ENCODE measurements at regions of chr4 and their contacts with region 1.

Region 1: DNA sequence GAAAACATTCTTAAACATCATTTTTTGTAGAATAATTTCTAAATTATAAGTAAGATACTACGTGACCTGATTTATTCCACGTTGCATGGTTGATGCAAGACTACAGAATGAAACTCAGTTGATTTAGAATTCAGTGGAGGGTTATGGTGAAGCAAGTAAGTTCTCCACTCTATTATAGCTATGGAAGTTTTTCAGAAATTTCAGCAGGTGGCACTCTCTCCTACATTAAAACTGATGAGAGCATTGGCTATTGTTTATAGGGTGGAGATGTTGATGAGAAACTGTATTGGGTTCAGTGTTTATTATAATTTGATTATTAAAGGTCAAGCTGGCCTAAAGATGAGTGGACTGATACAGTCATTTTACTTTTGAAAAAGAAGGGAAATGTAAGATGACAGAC is 88.0 kb downstream of the FNIP2 start:
- DNase-seq: peak; percentile 55
- CTCF ChIP-seq: peak; percentile 62

Region 2: DNA sequence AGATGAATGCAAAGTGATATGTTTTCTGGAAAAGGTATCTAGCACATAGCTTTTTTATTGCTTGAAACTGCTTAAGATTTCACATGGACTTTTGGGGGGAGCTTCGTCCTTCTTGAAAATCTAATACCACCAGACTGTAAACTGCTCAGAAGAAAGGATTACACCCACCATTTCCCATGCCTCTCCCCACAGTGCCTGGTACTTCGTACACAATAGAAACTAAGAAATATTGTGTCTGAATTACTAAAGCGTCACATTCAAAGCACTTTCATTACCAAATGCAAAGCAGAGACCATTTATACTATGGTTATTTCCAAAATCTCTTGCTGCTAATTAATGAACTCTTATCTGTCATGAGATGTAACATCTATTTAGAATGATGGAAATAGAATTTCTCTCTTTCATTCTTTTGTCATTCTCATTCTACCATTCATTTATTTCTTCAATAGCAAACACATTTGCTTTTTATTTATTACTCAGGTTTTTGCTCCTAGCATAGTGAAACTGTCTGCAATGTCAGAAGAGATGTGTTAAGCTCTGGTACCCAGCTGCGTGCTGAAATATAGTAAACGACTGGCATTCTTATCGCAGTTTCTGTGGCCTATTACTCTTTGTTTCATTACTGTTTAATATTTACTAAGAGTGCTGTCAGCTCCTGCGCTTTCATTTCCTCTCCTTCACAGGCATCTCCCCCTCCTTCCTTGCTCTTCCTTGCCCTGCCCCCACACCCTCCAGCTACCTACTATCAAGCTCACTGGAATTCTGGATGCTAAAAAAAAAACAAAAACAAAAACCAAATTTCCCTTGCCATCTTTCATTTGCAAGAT is 194.6 kb after region 1 on chr4:
- in situ Hi-C with region 1: no loop called
- DNase-seq: peak; percentile 53
- CTCF ChIP-seq: no peak

Region 3: DNA sequence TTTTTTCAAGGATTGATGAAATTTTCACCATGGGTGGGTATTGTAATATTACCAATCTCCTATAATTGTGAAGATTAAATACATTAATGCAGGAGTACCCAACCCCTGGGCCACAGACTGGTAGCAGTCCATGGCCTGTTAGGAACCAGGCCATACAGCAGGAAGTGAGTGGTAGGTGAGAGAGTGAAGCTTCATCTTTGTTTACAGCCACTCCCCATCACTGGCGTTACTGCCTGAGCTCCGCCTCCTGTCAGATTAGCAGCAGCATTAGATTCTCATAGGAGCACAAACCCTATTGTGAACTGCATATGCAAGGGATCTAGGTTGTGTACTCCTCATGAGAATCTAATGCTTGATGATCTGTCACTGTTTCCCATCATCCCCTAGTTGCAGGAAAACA is 261.1 kb after region 1 on chr4:
- in situ Hi-C with region 1: no loop called
- DNase-seq: no peak
- CTCF ChIP-seq: no peak

Region 4: GRCh38 chr4:159185591-159186023 is 328.8 kb after region 1 on chr4:
- in situ Hi-C with region 1: loop called (anchors 10 kb)
- DNase-seq: no peak
- CTCF ChIP-seq: no peak

Region 5: GRCh38 chr4:159227984-159228383 is 371.1 kb after region 1 on chr4:
- in situ Hi-C with region 1: no loop called
- DNase-seq: no peak
- CTCF ChIP-seq: no peak

Region 6: DNA sequence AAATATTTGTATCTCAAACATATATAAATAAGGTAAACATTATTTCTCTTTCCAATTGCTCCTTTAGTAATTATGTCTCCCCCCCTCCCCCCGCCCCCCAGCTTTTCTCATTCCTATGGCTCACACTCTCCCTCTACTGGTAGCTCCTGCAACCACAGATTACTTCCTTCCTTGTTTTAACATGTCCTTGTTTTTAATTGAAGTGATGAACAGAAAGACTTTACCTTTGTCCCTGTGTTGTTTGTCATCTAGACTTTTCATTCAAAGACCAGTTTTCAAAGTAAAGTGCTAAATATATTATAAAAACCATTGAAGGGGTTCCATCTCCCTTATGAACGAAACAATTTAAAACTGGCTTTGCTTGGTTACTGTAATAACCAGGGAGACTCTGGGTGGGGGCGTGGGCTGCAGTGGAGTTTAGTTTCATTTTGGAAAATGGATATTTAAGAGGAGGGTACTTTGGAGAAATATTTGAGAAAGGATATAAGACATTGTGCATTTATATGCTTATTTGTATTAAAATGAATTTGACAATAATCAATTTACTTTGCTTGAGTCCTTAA is 598.9 kb after region 1 on chr4:
- in situ Hi-C with region 1: loop called (anchors 10 kb)
- DNase-seq: peak; percentile 29
- CTCF ChIP-seq: peak; percentile 70

Measured in GM13977 (cell line).